ENCODE measurements at regions of chr1 and their contacts with region 1.

Region 1: DNA sequence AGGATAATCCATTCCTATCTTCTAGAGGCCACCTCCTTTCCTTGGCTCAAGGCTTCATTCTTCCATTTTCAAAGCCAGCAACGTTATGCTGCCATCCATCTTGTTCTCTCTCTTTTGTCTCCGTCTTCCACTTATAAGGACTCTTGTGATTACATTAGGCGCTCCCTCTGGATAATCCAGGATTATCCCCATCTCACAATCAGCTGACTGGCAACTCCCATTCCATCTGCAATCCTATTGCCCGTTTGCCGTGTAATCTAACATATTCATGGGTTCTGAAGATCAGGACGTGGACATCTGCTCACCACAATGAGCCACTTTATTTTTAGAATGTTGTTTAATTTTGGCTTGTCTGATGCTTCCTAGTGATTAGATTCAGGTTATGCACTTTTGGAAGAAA is 89.3 kb downstream of the EBNA1BP2 start:
- DNase-seq: no peak
- H3K4me3 ChIP-seq: no peak overlapping the region
- H3K27ac ChIP-seq: no peak overlapping the region
- H3K4me1 ChIP-seq: no peaks in the 10 kb centered on the region
- H3K27me3 ChIP-seq: no peaks in the 10 kb centered on the region
- CTCF ChIP-seq: no peak

Region 2: GRCh38 chr1:43121256-43121900 is 38.6 kb after region 1 on chr1:
- CTCF ChIA-PET with region 1: no interaction called
- dilution Hi-C with region 1: loop called (anchors 5 kb)
- in situ Hi-C with region 1: no loop called
- intact Hi-C with region 1: no loop called
- DNase-seq: peak; percentile 70
- H3K4me3 ChIP-seq: peak overlapping the region; percentile 46 to 50 (median 50)
- H3K27ac ChIP-seq: peak overlapping the region; percentile 72
- H3K4me1 ChIP-seq: peaks cover 13% of the 10 kb centered on the region
- H3K27me3 ChIP-seq: no peaks in the 10 kb centered on the region
- CTCF ChIP-seq: no peak

Region 3: DNA sequence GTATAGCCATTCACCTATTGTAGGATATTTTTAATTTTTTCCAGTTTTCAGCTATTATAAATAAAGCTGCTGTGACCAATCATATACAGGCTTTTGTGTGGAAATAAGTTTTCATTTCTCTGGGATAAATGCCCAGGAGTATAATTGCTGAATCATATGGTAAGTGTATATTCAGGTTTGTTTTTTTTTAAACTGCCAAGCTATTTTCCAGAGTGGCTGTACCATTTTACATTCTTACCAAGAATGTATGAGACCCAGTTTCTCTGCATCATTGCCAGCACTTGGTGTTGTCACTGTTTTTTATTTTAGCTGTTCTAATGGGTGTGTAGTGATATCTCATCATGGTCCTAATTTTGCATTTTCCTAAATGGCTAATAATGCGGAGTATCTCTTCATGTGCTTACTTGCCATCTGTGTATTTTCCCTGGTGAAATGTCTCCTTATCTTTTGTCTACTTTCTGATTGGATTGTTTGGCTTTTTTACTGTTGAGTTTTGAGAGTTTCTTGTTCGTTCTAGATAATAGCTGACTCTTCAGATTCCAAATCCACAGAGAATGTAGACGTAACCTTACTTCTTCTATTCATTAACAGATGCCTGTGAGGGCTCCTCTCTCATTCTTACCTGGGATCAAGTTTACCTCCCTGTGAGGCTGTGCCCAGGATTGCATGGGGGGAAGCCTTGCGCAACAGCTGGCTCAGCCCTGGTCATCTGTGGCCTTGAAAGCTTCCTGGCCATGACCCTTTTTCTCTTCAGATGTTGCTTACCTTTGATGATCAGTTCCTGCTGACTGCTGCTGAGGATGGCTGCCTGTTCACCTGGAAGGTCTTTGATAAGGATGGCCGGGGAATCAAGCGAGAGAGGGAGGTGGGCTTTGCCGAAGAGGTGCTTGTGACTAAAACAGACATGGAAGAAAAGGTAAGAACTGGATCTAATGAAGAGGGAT is 132.0 kb after region 1 on chr1:
- CTCF ChIA-PET with region 1: no interaction called
- dilution Hi-C with region 1: no loop called
- in situ Hi-C with region 1: no loop called
- intact Hi-C with region 1: loop called (anchors 5 kb)
- DNase-seq: no peak
- H3K4me3 ChIP-seq: no peak overlapping the region
- H3K27ac ChIP-seq: no peak overlapping the region
- H3K4me1 ChIP-seq: no peaks in the 10 kb centered on the region
- H3K27me3 ChIP-seq: no peaks in the 10 kb centered on the region
- CTCF ChIP-seq: no peak

Measured in mammary epithelial cell (primary cell).